AG04450 (cell line): ENCODE measurements at regions of chr12 and their contacts with region 1.

Region 1: GRCh38 chr12:12159988-12160387 is 89.2 kb downstream of the BCL2L14 start:
- DNase-seq: no peak
- H3K4me3 ChIP-seq: no peak overlapping the region
- H3K27ac ChIP-seq: no peak overlapping the region
- H3K27me3 ChIP-seq: no peaks in the 10 kb centered on the region
- CTCF ChIP-seq: no peak

Region 2: DNA sequence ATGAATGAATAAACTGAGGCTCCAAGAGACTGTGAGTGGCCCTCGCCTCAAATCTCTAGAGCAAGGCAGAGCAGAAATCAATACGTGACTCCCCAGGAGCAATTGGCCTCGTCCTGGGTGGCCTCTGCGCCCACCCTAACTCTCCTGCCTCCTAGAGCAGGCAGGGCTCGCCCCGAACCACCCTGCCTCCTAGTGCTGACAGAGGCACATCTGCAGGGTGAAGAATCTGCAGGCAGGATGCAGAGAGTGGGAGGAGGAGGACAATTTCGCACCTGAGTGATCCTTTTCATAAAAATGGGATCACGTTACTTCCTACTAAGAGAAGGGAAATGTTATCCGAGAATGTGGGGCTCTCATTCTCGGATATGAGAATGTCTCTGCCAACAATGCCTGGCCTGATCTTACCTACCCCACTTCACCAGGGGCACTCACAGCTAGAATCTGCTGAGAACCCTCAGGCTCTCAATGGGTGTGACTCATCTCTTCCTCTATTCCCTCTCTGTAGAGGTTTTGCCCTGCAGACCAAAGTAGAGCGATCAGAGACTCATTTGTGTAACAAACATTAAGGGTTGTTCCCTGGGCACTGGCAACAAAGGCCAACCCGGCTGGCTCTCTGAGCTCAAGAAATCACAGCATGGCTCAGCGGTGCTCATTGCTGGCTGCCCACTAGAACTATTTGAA is 150.9 kb before region 1 on chr12:
- CTCF ChIA-PET with region 1: no interaction called
- POLR2A ChIA-PET with region 1: no interaction called
- DNase-seq: no peak
- H3K4me3 ChIP-seq: no peak overlapping the region
- H3K27ac ChIP-seq: no peak overlapping the region
- H3K27me3 ChIP-seq: no peaks in the 10 kb centered on the region
- CTCF ChIP-seq: no peak

Region 3: GRCh38 chr12:12282761-12283425 is 122.9 kb after region 1 on chr12:
- CTCF ChIA-PET with region 1: no interaction called
- POLR2A ChIA-PET with region 1: interaction called, 13 read pairs
- DNase-seq: no peak
- H3K4me3 ChIP-seq: no peak overlapping the region
- H3K27ac ChIP-seq: no peak overlapping the region
- H3K27me3 ChIP-seq: no peaks in the 10 kb centered on the region
- CTCF ChIP-seq: no peak